Esophagus muscularis mucosa (tissue), 4 donors: ENCODE measurements at regions of chr22 and their contacts with region 1.

Region 1: DNA sequence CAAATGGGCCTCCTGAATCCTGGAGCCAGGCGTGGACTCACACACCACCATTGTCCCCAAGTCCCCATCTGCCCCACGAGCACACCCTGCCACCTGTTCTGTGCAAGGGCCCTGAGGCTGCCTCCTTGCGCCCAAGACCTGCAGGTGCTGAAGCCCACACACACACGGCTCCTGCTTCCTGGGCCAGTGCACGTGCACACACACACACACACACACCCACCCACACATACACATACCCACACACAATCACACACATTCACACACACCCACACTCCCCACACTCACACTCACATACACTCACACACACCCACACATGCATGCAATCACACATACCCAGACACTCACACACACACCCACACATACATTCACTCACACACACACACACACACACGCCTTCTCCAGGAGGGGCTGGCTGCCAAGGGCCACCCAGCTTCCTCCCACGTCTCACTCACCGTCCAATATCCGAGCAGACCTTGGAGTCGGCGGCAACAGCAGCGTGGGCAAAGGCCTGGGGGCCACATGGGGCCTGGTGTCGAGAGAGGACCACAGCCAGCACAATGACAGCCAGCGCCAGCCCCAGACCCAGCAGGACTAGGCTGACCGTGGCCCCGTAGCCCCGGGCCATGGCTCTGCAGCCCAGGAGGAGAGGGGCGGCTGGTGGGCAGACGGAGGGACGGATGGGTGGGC is 638 bp downstream of the GGT5 start:
- DNase-seq: no peak
- H3K4me3 ChIP-seq: peak overlapping the region; percentile 37 to 60 (median 44)
- H3K27ac ChIP-seq: peak overlapping the region; percentile 57 to 86 (median 78)
- H3K4me1 ChIP-seq: peaks cover 35 to 56% (median 53%) of the 10 kb centered on the region in 4 donors
- H3K27me3 ChIP-seq: no peaks in the 10 kb centered on the region
- CTCF ChIP-seq: no peak
- EP300 ChIP-seq: no peak
- POLR2A ChIP-seq: no peak

Region 2: GRCh38 chr22:24189249-24190158 is 54.7 kb before region 1 on chr22:
- intact Hi-C with region 1: loop called (anchors 2 kb)
- DNase-seq: no peak
- H3K4me3 ChIP-seq: no peak overlapping the region
- H3K27ac ChIP-seq: no peak overlapping the region
- H3K4me1 ChIP-seq: peaks cover 8 to 20% (median 18%) of the 10 kb centered on the region in 4 donors
- H3K27me3 ChIP-seq: no peaks in the 10 kb centered on the region
- CTCF ChIP-seq: peak; percentile 78 to 93 (median 91)
- EP300 ChIP-seq: no peak
- POLR2A ChIP-seq: no peak

Region 3: DNA sequence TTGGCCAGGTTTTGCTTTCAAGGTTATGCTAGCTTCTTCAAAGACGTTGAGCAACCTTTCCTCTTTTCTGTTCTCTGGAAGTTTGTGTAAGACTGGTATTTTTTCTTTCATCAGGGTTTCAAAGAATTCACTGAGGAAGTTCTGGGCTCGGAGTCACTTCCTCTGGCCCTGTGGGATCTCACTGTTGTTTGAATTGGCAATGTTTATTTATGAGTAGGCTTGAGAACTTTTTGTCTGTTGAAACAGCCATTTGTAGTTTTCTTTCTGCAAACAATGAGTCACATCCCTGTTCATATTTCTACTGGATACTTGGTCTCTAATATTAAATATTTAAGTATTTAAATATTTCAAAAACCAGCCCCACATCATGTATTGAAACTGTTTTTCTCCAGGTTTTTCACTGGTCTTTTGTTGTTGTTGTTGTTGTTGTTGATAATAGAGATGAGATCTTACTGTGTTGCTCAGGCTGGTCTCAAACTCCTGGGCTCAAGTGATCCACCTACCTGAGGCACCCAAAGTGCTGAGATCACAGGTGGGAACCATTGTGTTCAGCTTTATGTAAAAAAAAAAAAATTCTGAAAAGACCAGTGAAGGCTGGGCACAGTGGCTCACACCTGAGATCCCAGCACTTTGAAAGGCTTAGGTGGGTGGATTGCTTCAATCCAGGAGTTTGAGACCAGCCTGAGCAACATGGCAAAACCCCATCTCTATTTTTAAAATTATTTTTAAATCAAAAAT is 36.1 kb before region 1 on chr22:
- intact Hi-C with region 1: no loop called
- DNase-seq: no peak
- H3K4me3 ChIP-seq: no peak overlapping the region
- H3K27ac ChIP-seq: peak overlapping the region; percentile 42 to 85 (median 79)
- H3K4me1 ChIP-seq: peaks cover 17 to 30% (median 23%) of the 10 kb centered on the region in 4 donors
- H3K27me3 ChIP-seq: no peaks in the 10 kb centered on the region
- CTCF ChIP-seq: no peak
- EP300 ChIP-seq: no peak
- POLR2A ChIP-seq: no peak

Region 4: GRCh38 chr22:24303007-24303406 is 58.8 kb after region 1 on chr22:
- intact Hi-C with region 1: no loop called
- DNase-seq: no peak
- H3K4me3 ChIP-seq: no peak overlapping the region
- H3K27ac ChIP-seq: peak overlapping the region; percentile 78 to 85 (median 80)
- H3K4me1 ChIP-seq: peaks cover 48 to 96% (median 92%) of the 10 kb centered on the region in 4 donors
- H3K27me3 ChIP-seq: no peaks in the 10 kb centered on the region
- CTCF ChIP-seq: no peak
- EP300 ChIP-seq: no peak
- POLR2A ChIP-seq: no peak